ENCODE measurements at regions of chr2 and their contacts with region 1.

Region 1: DNA sequence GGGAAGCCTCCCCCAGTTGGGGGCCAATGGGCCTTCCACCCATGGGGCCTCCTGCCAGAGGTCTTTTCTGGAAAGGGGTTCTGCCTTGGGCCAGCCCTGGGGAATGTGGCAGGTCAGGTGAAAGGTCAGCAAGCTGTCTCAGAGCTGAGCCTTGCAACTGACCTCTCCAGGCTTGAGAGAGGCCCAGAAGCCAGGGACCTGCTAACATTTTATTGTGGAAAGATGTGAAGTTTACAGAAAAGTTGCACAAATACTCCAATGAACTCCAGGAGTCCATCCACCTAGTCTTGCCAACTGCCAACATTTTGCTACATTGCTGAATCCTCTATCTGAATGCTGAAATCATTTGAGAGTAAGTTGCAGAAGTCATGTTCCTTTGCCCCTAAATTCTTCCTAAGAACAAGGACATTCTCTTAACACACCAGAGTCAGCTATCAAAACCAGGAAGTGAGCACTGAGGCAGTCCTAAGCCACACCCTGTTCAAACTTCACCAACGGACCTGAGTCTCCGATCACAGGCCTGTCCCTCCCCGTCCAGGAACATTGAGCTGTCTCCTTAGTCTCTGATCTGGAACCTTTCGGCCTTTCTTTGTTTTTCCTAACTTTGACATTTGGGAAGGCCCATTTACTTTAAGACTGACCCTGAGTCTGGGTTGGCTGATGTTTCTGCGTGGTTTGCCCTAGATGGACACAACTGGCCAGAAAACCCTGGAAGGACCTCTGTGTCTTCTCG is 4.0 kb downstream of the SNORC start:
- DNase-seq: peak; percentile 47

Region 2: GRCh38 chr2:232697100-232697865 is 176.8 kb before region 1 on chr2 and contains the start of gene GIGYF2:
- intact Hi-C with region 1: no loop called
- DNase-seq: peak; percentile 98
- total RNA-seq, gene GIGYF2: 62.5 TPM

Region 3: GRCh38 chr2:232903989-232904388 is 29.9 kb after region 1 on chr2:
- intact Hi-C with region 1: loop called (anchors 1 kb)
- DNase-seq: peak; percentile 27

Region 4: GRCh38 chr2:232920055-232920454 is 46.0 kb after region 1 on chr2:
- intact Hi-C with region 1: loop called (anchors 2 kb)
- DNase-seq: no peak

Region 5: DNA sequence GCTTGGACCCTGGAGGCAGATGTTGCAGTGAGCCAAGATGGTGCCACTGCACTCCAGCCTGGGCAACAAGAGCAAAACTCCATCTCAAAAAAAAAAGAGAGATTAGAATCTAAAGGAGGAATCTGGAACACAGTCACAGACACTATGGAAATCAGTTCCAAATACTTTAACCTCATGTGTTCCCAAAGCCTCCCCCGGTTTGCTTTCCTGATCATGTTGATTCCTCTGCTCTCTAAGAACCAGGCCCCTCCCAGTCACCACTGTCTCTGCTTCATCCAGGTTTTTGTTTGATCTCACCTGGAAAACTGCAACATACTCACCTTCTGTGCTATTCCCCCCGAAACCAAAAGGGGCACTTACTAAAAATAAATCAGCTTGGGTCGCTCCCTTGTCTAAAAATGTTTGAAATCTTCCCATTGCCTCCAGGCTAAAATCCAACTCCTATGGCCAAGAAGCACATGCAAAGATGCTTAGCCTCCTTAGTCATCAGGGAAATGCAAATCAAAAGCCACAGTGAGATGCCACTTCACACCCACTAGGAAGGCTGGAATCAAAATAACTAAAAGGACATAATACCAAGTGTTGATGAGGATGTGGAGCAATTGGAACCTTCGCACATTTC is 152.2 kb after region 1 on chr2:
- intact Hi-C with region 1: no loop called
- DNase-seq: no peak